ENCODE measurements at regions of chr16 and their contacts with region 1.

Region 1: DNA sequence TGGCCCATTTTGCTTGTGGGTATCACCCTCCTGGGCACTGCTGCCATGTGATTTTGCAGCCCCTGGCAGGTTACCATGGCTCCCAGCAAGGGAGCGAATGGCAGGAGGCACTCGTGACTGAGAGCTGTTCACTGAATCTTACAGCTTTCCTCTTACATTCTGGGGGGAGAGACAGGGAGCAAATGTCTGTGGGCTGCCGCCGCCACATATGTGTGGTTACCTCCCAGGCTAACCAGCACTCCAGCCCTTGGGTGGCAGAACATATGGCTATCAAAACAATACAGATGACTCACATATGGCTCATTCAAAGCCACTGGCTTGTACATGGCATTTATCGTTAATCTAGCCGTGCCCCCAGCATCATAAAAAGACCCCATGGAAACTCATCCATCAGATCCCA is 19.8 kb downstream of the GTF3C1 start:
- H3K4me3 ChIP-seq: no peak overlapping the region
- H3K27ac ChIP-seq: no peak overlapping the region
- H3K4me1 ChIP-seq: no peaks in the 10 kb centered on the region
- CTCF ChIP-seq: no peak

Region 2: DNA sequence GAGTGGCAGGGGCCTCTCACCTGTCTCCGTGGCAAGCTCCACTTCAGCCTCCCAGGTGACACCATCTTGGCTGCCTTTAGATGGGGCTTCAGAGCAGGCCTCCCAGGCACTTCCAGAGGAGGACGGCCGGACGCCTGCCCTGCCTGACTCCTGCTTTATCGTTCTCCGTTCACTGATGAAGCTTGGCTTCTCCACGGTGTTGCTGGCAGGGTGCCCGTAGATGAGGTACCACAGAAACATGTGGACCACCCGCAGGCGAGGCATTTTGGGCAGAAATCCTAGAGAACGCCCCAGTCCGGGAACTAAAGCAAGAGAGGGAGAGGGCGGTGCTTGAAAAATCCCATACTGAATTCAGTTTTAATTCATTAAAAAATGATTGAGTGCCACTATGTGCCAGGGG is 34.8 kb before region 1 on chr16:
- CTCF ChIA-PET with region 1: no interaction called
- POLR2A ChIA-PET with region 1: no interaction called
- H3K4me3 ChIP-seq: no peak overlapping the region
- H3K27ac ChIP-seq: no peak overlapping the region
- H3K4me1 ChIP-seq: no peaks in the 10 kb centered on the region
- CTCF ChIP-seq: no peak

Region 3: GRCh38 chr16:27515874-27516353 is 14.0 kb before region 1 on chr16:
- CTCF ChIA-PET with region 1: interaction called, 12 read pairs
- POLR2A ChIA-PET with region 1: no interaction called
- H3K4me3 ChIP-seq: no peak overlapping the region
- H3K27ac ChIP-seq: no peak overlapping the region
- H3K4me1 ChIP-seq: no peaks in the 10 kb centered on the region
- CTCF ChIP-seq: peak; percentile 41